MCF 10A (cell line): ENCODE measurements at regions of chr1 and their contacts with region 1.

Region 1: GRCh38 chr1:204975570-204976235 is 67.3 kb upstream of the CNTN2 start:
- DNase-seq: peak; percentile 78
- H3K4me3 Mint-ChIP-seq: no peak overlapping the region
- H3K27ac Mint-ChIP-seq: no peak overlapping the region
- H3K4me1 Mint-ChIP-seq: peaks cover 8% of the 10 kb centered on the region
- H3K27me3 Mint-ChIP-seq: peaks cover 58% of the 10 kb centered on the region
- CTCF ChIP-seq: peak; percentile 99

Region 2: GRCh38 chr1:204961765-204962419 is 13.8 kb before region 1 on chr1:
- CTCF ChIA-PET with region 1: interaction called, 52 read pairs
- POLR2A ChIA-PET with region 1: interaction called, 3 read pairs
- intact Hi-C with region 1: no loop called
- DNase-seq: no peak
- H3K4me3 Mint-ChIP-seq: no peak overlapping the region
- H3K27ac Mint-ChIP-seq: no peak overlapping the region
- H3K4me1 Mint-ChIP-seq: no peaks in the 10 kb centered on the region
- H3K27me3 Mint-ChIP-seq: peaks cover 91% of the 10 kb centered on the region
- CTCF ChIP-seq: no peak

Region 3: GRCh38 chr1:205032508-205032907 is 56.8 kb after region 1 on chr1:
- CTCF ChIA-PET with region 1: interaction called, 11 read pairs
- POLR2A ChIA-PET with region 1: no interaction called
- intact Hi-C with region 1: no loop called
- DNase-seq: no peak
- H3K4me3 Mint-ChIP-seq: no peak overlapping the region
- H3K27ac Mint-ChIP-seq: no peak overlapping the region
- H3K4me1 Mint-ChIP-seq: no peaks in the 10 kb centered on the region
- H3K27me3 Mint-ChIP-seq: peaks cover 85% of the 10 kb centered on the region
- CTCF ChIP-seq: no peak

Region 4: GRCh38 chr1:205042911-205043806 is 67.5 kb after region 1 on chr1 and contains the start of gene CNTN2:
- CTCF ChIA-PET with region 1: interaction called, 16 read pairs
- POLR2A ChIA-PET with region 1: no interaction called
- intact Hi-C with region 1: no loop called
- DNase-seq: no peak
- H3K4me3 Mint-ChIP-seq: no peak within 1 kb of the TSS
- H3K27ac Mint-ChIP-seq: no peak within 1 kb of the TSS
- H3K4me1 Mint-ChIP-seq: no peaks in the 10 kb centered on the region
- H3K27me3 Mint-ChIP-seq: peaks cover 84% of the 10 kb centered on the region
- CTCF ChIP-seq: no peak
- total RNA-seq, gene CNTN2: 0.05 TPM in 1 of 2 replicates, not detected in the other

Region 5: GRCh38 chr1:205056188-205056611 is 80.5 kb after region 1 on chr1:
- CTCF ChIA-PET with region 1: interaction called, 272 read pairs
- POLR2A ChIA-PET with region 1: interaction called, 4 read pairs
- intact Hi-C with region 1: loop called (anchors 1 kb)
- DNase-seq: no peak
- H3K4me3 Mint-ChIP-seq: no peak overlapping the region
- H3K27ac Mint-ChIP-seq: no peak overlapping the region
- H3K4me1 Mint-ChIP-seq: no peaks in the 10 kb centered on the region
- H3K27me3 Mint-ChIP-seq: peaks cover 75% of the 10 kb centered on the region
- CTCF ChIP-seq: no peak

Region 6: DNA sequence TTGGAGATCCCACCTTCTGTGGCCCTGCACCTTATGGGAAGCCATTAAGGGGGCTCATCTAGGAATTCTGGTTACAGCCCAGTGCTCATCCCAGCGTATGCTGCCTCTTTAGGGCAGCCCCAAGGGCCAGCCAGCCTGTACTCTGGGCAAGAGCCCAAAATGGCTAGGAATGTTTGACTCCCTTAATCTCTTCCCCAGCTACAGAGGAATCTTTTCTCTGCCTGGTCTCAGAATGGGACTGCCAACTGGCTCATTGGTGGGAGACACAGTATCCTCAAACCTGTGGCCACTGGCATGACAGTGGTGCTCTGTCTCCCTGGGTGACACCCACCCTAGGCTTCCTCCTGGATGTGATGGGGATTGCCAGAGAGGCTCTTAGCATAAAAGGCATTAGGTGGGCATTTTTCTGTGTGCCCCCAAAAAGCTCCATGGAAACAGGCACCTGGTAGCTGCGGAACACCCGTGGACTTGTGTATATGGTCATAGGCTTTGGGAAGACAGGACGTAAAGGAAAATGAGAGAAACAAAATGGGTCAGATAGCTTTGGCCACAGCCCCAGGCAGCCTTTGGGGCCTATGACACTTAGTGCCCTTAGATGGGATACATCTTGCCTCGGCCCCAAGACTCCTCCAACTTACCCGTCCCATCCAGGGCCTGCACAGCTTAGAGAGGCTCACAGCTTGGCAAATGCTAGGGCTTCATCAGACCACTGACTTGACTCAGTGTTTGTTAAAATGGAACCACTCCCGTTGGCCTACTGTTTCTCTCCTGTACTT is 101.6 kb after region 1 on chr1:
- CTCF ChIA-PET with region 1: interaction called, 18 read pairs
- POLR2A ChIA-PET with region 1: interaction called, 3 read pairs
- intact Hi-C with region 1: no loop called
- DNase-seq: no peak
- H3K4me3 Mint-ChIP-seq: no peak overlapping the region
- H3K27ac Mint-ChIP-seq: no peak overlapping the region
- H3K4me1 Mint-ChIP-seq: peaks cover 28% of the 10 kb centered on the region
- H3K27me3 Mint-ChIP-seq: no peaks in the 10 kb centered on the region
- CTCF ChIP-seq: no peak

Region 7: GRCh38 chr1:205284343-205285144 is 308.8 kb after region 1 on chr1:
- CTCF ChIA-PET with region 1: no interaction called
- POLR2A ChIA-PET with region 1: no interaction called
- intact Hi-C with region 1: no loop called
- DNase-seq: peak; percentile 100
- H3K4me3 Mint-ChIP-seq: peak overlapping the region; percentile 24
- H3K27ac Mint-ChIP-seq: peak overlapping the region; percentile 96
- H3K4me1 Mint-ChIP-seq: peaks cover 75% of the 10 kb centered on the region
- H3K27me3 Mint-ChIP-seq: no peaks in the 10 kb centered on the region
- CTCF ChIP-seq: no peak